ENCODE measurements at regions of chr17 and their contacts with region 1.

Region 1: DNA sequence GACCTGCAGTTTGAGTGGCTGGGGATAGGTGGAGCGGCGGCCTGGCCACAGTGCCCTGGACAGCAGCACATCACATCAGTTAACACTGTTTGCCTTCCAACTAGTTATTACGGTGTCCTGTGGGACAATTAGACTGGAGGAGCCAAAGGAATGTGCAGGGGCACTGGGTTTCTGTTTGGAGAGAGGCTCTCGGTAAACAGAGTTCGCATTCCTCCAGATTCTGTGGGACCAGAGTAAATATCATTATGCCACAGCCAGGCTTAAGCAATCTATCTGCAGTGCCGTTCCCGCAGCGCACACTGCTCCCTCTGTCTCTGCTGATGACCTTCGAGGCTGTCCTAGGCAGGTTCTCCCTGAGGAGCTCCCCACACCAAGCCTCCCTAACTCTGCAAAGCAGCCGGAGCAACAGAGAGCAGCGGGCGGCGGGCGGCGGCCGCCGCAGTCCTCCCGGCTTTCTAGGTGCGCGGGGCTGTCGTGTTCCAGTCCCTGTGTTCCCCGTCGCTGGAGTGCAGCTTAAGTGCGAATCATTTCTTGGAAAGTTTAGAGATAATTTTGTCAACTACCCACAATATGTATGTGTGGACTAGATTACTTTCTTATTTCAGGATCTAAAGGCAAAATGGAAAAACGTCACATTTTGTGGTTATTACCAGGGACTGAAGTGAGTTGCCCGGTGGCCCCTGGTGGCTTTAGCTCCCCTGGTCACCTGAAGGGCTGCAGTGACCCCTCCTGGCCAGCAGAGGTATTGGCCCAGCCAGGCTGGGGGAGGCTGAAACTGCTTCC is 43.2 kb downstream of the PGS1 start:
- DNase-seq: peak; percentile 84
- H3K4me3 ChIP-seq: no peak overlapping the region
- H3K27ac ChIP-seq: peak overlapping the region in 2 of 4 donors; percentile 2 to 9
- H3K4me1 ChIP-seq: peaks cover 6 to 29% (median 11%) of the 10 kb centered on the region in 4 donors
- H3K27me3 ChIP-seq: no peaks in the 10 kb centered on the region
- CTCF ChIP-seq: peak; percentile 97 to 99 (median 98)
- EP300 ChIP-seq: no peak
- POLR2A ChIP-seq: no peak

Region 2: GRCh38 chr17:78289802-78290363 is 131.8 kb before region 1 on chr17:
- in situ Hi-C with region 1: loop called in 3 of 4 experiments (anchors 5 to 10 kb)
- intact Hi-C with region 1: loop called (anchors 2 kb)
- DNase-seq: peak; percentile 84
- H3K4me3 ChIP-seq: no peak overlapping the region
- H3K27ac ChIP-seq: no peak overlapping the region
- H3K4me1 ChIP-seq: peaks cover 0 to 4% (median 1%) of the 10 kb centered on the region in 4 donors
- H3K27me3 ChIP-seq: no peaks in the 10 kb centered on the region
- CTCF ChIP-seq: peak; percentile 64 to 95 (median 79)
- EP300 ChIP-seq: no peak
- POLR2A ChIP-seq: no peak

Measured in transverse colon (tissue), 4 donors.